AG04450 (cell line): ENCODE measurements at regions of chr2 and their contacts with region 1.

Region 1: GRCh38 chr2:96138179-96139145 is at the start of gene ASTL:
- DNase-seq: no peak
- H3K4me3 ChIP-seq: no peak within 1 kb of the TSS
- H3K27ac ChIP-seq: no peak within 1 kb of the TSS
- H3K27me3 ChIP-seq: peaks cover 17% of the 10 kb centered on the region
- CTCF ChIP-seq: peak; percentile 73
- polyA plus RNA-seq, gene ASTL: not detected in 2 replicates

Region 2: GRCh38 chr2:96265840-96266679 is 127.6 kb after region 1 on chr2 and contains the starts of genes CIAO1 and TMEM127:
- CTCF ChIA-PET with region 1: interaction called, 11 read pairs
- POLR2A ChIA-PET with region 1: interaction called, 3 read pairs
- DNase-seq: peak; percentile 92
- H3K4me3 ChIP-seq: peak within 1 kb of the TSS; percentile 88
- H3K27ac ChIP-seq: peak within 1 kb of the TSS; percentile 84
- H3K27me3 ChIP-seq: no peaks in the 10 kb centered on the region
- CTCF ChIP-seq: peak; percentile 54
- polyA plus RNA-seq, gene CIAO1: 65.2 and 77.0 TPM in 2 replicates
- polyA plus RNA-seq, gene TMEM127: 45.3 and 48.7 TPM in 2 replicates